Lower leg skin (tissue), 4 donors: ENCODE measurements at regions of chr16 and their contacts with region 1.

Region 1: DNA sequence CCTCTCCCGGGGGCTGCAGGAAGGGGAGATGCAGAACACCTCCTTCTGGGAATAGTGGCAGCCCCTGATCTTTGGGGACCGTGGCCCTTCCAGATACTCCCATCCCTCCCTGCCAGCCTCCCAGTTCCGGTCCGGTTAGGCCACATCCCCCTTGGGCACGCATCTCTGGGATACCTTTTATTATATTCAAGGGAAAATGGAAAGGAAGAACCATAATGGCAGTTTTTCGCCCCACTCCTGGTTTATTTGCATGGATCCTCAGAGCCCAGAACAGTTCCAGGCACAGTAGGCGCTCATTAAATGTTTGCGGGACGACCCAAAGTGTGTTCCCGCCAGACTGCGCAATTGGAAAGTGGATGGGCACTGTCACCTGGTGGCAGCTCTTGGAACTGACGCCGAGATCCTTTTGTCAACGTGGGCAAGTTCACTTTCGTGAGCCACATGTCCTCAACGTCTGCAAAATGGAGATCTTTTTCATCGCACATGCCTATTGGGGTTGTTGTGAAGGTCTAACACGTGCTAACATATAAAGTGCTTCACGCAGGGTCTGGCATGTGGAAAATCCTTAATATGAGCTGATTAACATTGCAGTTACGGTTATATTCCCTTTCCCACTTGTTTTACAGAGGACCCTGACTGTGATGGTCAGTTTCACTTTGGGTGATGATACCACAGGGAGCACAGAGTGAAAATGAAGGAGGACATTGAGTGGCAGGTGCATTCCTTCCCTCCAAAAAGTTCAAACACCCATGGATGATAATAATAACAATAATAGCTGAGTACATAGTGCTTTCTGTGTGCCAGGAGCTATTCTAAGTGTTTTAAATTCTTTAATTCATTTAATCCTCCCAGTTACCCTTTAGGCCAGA is 1.7 kb upstream of the GPRC5B start:
- DNase-seq: peak; percentile 83 to 96
- H3K4me3 ChIP-seq: no peak overlapping the region
- CTCF ChIP-seq: peak in 2 of 3 donors; percentile 86 to 100
- POLR2A ChIP-seq: no peak

Region 2: GRCh38 chr16:19583665-19584300 is 302.5 kb before region 1 on chr16:
- intact Hi-C with region 1: loop called (anchors 5 kb)
- DNase-seq: no peak
- H3K4me3 ChIP-seq: no peak overlapping the region
- CTCF ChIP-seq: no peak
- POLR2A ChIP-seq: no peak

Region 3: GRCh38 chr16:19601083-19601976 is 285.0 kb before region 1 on chr16:
- intact Hi-C with region 1: loop called (anchors 1 kb)
- DNase-seq: no peak
- H3K4me3 ChIP-seq: no peak overlapping the region
- CTCF ChIP-seq: no peak
- POLR2A ChIP-seq: no peak

Region 4: DNA sequence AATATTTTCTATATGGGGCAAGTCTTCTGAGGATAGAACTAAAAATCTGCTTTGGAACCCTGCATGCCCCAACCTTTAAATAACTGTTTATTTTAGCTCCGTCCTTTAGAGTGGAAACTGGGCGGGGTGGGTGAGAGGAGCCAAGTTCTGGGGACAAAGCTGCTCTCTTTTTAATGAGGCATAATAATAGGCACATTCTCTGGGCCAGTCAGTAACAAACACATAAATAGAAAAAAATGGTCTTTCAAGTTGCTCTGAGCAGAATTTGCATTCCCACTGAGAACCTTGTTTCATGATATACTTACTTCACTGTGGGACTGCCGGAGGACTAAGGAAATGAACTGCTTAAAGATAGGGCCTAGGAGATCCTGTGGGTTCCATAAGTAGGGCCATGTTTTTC is 219.8 kb before region 1 on chr16:
- intact Hi-C with region 1: no loop called
- DNase-seq: no peak
- H3K4me3 ChIP-seq: no peak overlapping the region
- CTCF ChIP-seq: no peak
- POLR2A ChIP-seq: no peak